Thyroid gland (tissue), 4 donors: ENCODE measurements at regions of chr5 and their contacts with region 1.

Region 1: GRCh38 chr5:135191084-135191826 is 157.2 kb upstream of the PITX1 start:
- DNase-seq: peak; percentile 88 to 92
- H3K4me3 ChIP-seq: peak overlapping the region in 1 of 3 donors; percentile 2
- H3K27ac ChIP-seq: no peak overlapping the region
- H3K4me1 ChIP-seq: peaks cover 4 to 8% of the 10 kb centered on the region in 2 donors
- H3K27me3 ChIP-seq: no peaks in the 10 kb centered on the region
- CTCF ChIP-seq: peak; percentile 80 to 98 (median 96)
- POLR2A ChIP-seq: no peak

Region 2: DNA sequence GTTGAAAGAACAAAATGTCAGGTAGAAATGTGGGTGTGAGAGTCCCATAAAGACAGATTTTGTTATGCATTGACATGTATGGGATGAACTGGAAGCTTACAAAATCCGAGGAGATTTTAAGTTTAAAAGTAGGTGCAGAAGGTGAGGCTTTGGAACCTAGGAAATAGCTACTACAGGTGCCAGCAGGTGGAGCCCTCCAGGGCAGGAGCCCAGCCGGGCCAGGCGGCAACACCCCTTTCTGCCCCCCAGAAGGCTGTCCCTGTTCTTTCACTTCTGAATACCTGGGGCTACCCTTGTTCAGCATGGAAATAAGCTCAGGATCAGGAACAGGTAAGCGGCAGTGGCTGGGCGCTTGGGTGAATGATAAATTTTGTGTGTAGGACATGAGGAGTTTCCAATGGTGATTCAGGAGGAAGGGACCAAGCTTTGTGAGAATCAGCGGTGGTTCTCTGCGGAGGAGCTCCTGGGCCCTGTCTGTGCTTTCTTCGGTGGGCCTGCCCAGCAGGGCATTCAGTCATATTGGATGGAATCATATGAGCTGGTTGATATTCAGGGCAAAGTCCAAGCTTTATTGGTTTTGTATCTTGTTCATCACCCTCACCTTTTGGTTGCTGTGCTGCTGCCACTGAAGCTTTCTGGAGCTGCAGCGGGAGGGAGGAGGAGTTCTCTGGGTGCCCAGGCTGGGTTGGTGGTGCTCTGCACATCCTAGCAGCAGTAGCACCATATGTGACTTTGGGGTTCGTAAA is 274.0 kb before region 1 on chr5:
- intact Hi-C with region 1: loop called (anchors 10 kb)
- DNase-seq: no peak
- H3K4me3 ChIP-seq: no peak overlapping the region
- H3K27ac ChIP-seq: no peak overlapping the region
- H3K4me1 ChIP-seq: peaks cover 11 to 17% of the 10 kb centered on the region in 2 donors
- H3K27me3 ChIP-seq: no peaks in the 10 kb centered on the region
- CTCF ChIP-seq: peak in 3 of 6 experiments; percentile 24 to 46 (median 37)
- POLR2A ChIP-seq: no peak